Heart left ventricle (tissue), 16 donors: ENCODE measurements at regions of chr20 and their contacts with region 1.

Region 1: DNA sequence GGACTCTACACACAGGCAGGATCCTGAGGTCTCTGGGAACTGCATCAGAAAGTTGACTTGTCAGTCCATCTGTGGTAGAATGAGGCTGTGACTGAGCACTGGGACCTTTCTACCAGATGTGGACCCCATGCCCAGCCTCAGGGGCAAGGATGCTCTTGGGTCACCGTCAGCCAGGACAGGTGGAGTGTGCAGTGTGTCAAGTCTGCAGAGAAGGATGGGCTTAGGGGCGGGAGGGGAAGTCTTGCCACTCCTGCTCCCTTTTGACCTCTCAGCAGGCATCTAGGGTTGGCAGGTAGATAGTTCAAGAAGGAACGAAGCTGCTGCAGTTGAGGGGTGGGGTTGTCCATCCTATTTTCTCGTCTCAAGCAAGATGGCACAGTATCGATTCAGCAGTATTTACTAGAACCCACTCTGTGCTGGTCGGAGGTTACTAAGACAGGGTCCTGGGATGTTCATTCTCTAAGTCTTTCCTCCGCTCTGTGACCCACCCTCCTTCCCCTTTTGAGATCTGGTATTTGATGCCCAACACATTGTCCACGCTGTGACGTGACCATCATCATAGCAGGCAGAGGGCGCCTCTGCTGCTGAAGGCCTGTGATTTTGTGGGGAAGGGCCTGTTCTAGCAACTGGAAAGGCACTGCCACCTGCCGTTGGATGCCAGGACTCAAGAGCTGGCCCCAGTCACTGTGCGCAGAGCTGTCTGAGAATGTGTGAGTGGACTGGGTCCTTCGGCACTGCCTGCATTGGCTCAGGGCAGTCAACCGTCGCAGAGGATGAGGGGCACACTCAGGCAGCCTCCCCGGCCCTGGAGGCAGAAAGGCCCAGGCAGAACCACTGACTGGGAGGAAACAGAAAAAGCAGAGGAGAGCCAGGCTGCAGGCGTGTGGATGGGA is 23.2 kb downstream of the RBCK1 start:
- DNase-seq: peak in 4 of 5 donors; percentile 46 to 64 (median 56)
- ATAC-seq: peak; percentile 56 to 80 (median 66)
- H3K4me3 ChIP-seq: no peak overlapping the region
- H3K27ac ChIP-seq: peak overlapping the region in 2 of 12 donors; percentile 9 to 20
- H3K4me1 ChIP-seq: peaks cover 0 to 22% (median 3%) of the 10 kb centered on the region in 12 donors
- H3K27me3 ChIP-seq: no peaks in the 10 kb centered on the region
- CTCF ChIP-seq: peak; percentile 26 to 72 (median 50)
- POLR2A ChIP-seq: no peak

Region 2: DNA sequence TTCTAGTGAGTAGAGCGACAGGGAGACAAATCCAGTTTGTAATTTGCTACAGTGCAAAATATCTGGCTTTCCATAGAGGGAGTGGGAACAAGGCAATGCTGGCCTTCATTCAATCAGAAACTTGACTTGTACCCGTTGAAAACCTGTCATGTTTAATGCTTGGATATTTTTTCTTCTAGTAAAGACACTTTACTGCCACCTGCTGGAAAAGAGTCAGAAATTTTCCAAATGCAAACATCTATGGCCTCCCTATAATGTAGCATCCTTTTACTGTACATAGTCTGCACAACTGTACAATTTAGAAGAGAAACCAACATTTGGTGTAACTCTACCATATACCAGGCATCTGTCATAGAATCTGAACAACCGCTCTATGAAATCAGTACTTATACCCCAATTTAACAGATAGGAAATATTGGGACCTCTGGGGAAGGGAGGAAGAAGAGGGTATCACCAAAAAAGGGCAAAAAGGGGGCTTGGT is 47.7 kb after region 1 on chr20:
- intact Hi-C with region 1: loop called in 1 of 10 experiments (anchors 5 kb)
- DNase-seq: peak in 1 of 5 donors; percentile 16
- ATAC-seq: peak in 2 of 4 donors; percentile 28 to 31
- H3K4me3 ChIP-seq: no peak overlapping the region
- H3K27ac ChIP-seq: no peak overlapping the region
- H3K4me1 ChIP-seq: peaks cover 0 to 21% (median 7%) of the 10 kb centered on the region in 12 donors
- H3K27me3 ChIP-seq: no peaks in the 10 kb centered on the region
- CTCF ChIP-seq: peak; percentile 41 to 75 (median 63)
- POLR2A ChIP-seq: no peak

Region 3: DNA sequence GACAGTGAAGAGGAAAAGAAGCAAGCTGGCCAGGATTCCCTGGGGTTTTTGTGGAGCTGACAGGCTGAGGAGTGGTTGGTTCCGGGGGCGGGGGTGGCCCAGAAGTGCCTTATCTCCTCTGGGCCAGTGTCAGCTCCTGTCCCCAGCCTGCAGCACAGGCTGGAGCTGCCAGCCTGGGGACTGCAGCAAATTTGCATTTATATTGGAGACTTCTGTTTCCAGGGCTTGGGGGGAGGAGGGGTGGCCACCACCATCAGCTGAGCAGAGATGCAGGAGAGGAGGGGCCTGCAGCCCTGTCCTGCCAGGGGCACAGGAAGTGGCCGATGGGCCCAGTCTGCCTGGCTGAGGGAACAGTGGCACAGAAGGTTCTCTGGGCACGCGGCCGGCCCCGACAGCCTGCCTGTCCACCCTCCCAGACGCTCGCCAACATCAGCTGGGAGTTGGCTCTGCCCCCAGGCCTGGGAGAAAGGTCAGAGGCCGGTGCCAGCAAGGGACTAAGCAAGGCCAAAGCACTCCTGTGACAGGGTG is 268.6 kb after region 1 on chr20:
- intact Hi-C with region 1: no loop called
- DNase-seq: peak; percentile 68 to 92 (median 83)
- ATAC-seq: peak; percentile 95 to 97 (median 96)
- H3K4me3 ChIP-seq: no peak overlapping the region
- H3K27ac ChIP-seq: peak overlapping the region; percentile 17 to 87 (median 72)
- H3K4me1 ChIP-seq: peaks cover 0 to 25% (median 3%) of the 10 kb centered on the region in 12 donors
- H3K27me3 ChIP-seq: no peaks in the 10 kb centered on the region
- CTCF ChIP-seq: no peak
- POLR2A ChIP-seq: no peak